ENCODE measurements at regions of chr15 and their contacts with region 1.

Region 1: GRCh38 chr15:38610748-38611147 is 46.1 kb upstream of the RASGRP1 start:
- DNase-seq: peak; percentile 78
- ATAC-seq: peak; percentile 52
- H3K4me3 Mint-ChIP-seq: peak overlapping the region; percentile 42
- H3K27ac Mint-ChIP-seq: peak overlapping the region; percentile 96
- H3K4me1 Mint-ChIP-seq: peaks cover 81% of the 10 kb centered on the region
- H3K27me3 Mint-ChIP-seq: no peaks in the 10 kb centered on the region

Region 2: GRCh38 chr15:38521316-38521715 is 89.4 kb before region 1 on chr15:
- CTCF ChIA-PET with region 1: no interaction called
- POLR2A ChIA-PET with region 1: interaction called, 10 read pairs
- intact Hi-C with region 1: no loop called
- DNase-seq: no peak
- ATAC-seq: peak; percentile 20
- H3K4me3 Mint-ChIP-seq: no peak overlapping the region
- H3K27ac Mint-ChIP-seq: peak overlapping the region; percentile 76
- H3K4me1 Mint-ChIP-seq: peaks cover 73% of the 10 kb centered on the region
- H3K27me3 Mint-ChIP-seq: no peaks in the 10 kb centered on the region

Region 3: DNA sequence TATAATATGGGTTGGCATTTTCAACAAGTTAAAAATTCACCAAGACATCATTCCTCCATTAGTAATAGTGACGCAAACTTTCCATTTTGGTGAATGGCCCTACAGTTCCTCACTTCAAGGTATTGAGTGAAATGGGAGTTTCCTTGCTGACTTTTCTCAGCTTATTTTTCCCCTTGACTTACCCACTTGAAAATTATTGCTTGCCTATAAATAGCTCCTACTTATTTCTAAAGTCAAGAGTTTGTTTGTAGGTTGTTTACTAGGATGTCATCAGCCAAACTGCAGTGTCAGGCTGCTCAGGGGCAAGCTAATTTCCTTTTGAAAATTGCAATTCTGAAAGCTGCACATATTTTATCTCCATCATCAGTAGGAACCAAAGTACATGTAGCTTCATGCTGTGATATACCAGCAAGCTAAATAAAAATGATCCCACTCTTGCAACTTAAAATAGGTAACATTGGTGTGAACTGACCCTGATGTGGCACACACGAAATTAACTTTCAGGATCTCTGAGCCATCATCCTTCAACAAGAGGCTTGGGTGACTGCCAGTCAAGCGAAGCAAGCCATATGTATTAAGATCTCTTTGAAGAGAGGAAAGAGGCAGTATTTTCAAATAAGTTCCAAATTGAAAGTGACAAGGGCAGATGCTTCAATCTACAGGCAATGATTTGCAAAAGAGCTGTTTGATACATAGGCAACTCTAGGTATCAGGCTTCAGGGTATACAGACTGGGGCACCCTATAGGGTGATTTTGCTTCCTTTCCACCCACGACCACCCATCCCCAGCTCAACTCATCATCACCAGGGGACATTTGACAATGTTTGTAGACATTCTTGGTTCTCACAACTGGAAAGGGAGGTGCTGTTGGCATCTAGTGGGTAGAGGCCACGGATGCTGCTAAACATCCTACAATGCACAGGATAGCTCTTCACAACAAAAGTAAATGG is 20.7 kb after region 1 on chr15:
- CTCF ChIA-PET with region 1: interaction called, 10 read pairs
- POLR2A ChIA-PET with region 1: interaction called, 9 read pairs
- intact Hi-C with region 1: loop called (anchors 2 kb)
- DNase-seq: no peak
- ATAC-seq: peak; percentile 69
- H3K4me3 Mint-ChIP-seq: no peak overlapping the region
- H3K27ac Mint-ChIP-seq: peak overlapping the region; percentile 88
- H3K4me1 Mint-ChIP-seq: peaks cover 54% of the 10 kb centered on the region
- H3K27me3 Mint-ChIP-seq: no peaks in the 10 kb centered on the region

Region 4: GRCh38 chr15:38652998-38653397 is 42.2 kb after region 1 on chr15:
- CTCF ChIA-PET with region 1: interaction called, 13 read pairs
- POLR2A ChIA-PET with region 1: interaction called, 6 read pairs
- intact Hi-C with region 1: loop called (anchors 2 kb)
- DNase-seq: peak; percentile 73
- ATAC-seq: peak; percentile 66
- H3K4me3 Mint-ChIP-seq: peak overlapping the region; percentile 50
- H3K27ac Mint-ChIP-seq: peak overlapping the region; percentile 92
- H3K4me1 Mint-ChIP-seq: peaks cover 75% of the 10 kb centered on the region
- H3K27me3 Mint-ChIP-seq: no peaks in the 10 kb centered on the region

Region 5: DNA sequence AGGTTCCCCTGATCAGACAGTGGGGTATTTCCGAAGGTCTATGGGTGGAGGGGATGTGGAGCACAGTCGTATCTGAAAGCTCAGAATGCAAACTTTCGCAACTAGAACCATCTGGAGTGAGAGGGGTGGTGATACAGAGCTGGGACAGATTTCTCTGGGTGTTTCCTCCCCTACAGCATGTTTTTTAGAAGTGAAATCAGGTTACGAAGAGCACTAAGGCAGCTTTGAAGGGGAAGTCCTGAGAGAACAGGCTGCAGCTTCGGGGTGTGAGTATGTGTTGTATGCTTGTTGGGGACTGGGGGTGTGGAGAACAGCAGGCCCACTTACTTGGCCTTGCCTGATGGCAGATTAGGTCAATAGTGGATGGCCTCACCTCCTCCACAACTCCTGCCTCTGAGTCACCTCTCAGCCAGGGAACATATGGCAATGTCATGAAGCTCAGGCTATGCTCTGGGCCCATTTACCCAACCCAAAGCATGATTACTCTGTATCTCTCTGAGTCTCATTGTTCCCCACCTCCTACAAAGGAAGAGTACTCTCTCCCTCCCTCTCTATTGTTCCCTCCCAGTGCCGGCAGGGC is 61.0 kb after region 1 on chr15:
- CTCF ChIA-PET with region 1: interaction called, 8 read pairs
- POLR2A ChIA-PET with region 1: interaction called, 50 read pairs
- intact Hi-C with region 1: loop called (anchors 1 kb)
- DNase-seq: peak; percentile 65
- ATAC-seq: peak; percentile 55
- H3K4me3 Mint-ChIP-seq: peak overlapping the region; percentile 60
- H3K27ac Mint-ChIP-seq: peak overlapping the region; percentile 98
- H3K4me1 Mint-ChIP-seq: peaks cover 75% of the 10 kb centered on the region
- H3K27me3 Mint-ChIP-seq: no peaks in the 10 kb centered on the region

Region 6: DNA sequence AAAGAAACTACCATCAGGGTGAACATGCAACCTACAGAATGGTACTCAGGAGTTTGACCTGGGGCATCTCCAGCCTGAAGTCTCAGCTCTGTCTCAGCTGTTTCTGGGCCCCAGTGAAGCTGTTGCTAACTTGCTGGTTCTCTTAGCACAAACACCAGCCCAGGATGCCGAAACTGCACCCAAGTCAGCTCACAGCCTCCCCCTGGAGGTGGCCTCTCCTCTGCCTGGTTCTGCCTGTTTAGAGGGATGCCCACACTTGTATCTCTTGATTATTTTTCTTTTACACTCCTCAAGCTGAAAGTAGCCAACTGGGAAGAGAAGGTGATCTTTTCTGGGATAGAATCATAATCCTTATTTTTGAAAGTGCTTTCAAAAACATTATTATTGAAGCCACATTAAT is 242.9 kb after region 1 on chr15:
- CTCF ChIA-PET with region 1: no interaction called
- POLR2A ChIA-PET with region 1: no interaction called
- intact Hi-C with region 1: no loop called
- DNase-seq: peak; percentile 45
- ATAC-seq: peak; percentile 33
- H3K4me3 Mint-ChIP-seq: no peak overlapping the region
- H3K27ac Mint-ChIP-seq: no peak overlapping the region
- H3K4me1 Mint-ChIP-seq: no peaks in the 10 kb centered on the region
- H3K27me3 Mint-ChIP-seq: peaks cover 12% of the 10 kb centered on the region

Region 7: DNA sequence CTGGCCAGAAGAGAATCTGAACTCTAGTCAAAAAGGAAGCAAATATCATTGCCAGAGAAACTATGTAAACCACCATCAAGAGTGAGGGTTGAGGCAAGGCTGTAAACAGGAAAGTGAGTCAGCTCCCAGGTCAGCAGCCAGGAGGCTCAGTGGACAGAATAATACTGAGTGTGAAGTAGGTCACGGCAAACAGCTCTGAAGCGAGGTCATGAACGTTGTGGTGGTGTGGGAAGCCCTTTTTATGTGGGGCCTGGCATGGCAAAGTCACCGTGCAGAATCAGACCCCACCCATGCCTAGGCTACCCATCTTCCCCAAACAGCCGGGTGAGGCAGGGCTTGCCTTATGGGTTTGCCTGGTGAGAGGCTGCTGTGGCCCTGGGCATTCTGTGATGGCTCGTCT is 1014.1 kb after region 1 on chr15:
- CTCF ChIA-PET with region 1: no interaction called
- POLR2A ChIA-PET with region 1: no interaction called
- intact Hi-C with region 1: loop called in 1 of 2 experiments (anchors 10 kb)
- DNase-seq: peak; percentile 68
- ATAC-seq: peak; percentile 69
- H3K4me3 Mint-ChIP-seq: peak overlapping the region; percentile 18
- H3K27ac Mint-ChIP-seq: peak overlapping the region; percentile 93
- H3K4me1 Mint-ChIP-seq: peaks cover 66% of the 10 kb centered on the region
- H3K27me3 Mint-ChIP-seq: peaks cover 2% of the 10 kb centered on the region

Measured in activated CD4-positive, alpha-beta T cell treated with anti-CD3 and anti-CD28 coated beads for 36 hours (primary cell).